GM23248 (cell line): ENCODE measurements at regions of chrX and their contacts with region 1.

Region 1: GRCh38 chrX:13515211-13515930 is 54.0 kb upstream of the EGFL6 start:
- DNase-seq: no peak
- H3K4me3 ChIP-seq: no peak overlapping the region
- H3K27ac ChIP-seq: no peak overlapping the region
- H3K4me1 ChIP-seq: no peaks in the 10 kb centered on the region
- H3K27me3 ChIP-seq: no peaks in the 10 kb centered on the region

Region 2: GRCh38 chrX:13357925-13358324 is 157.4 kb before region 1 on chrX:
- in situ Hi-C with region 1: no loop called
- DNase-seq: no peak
- H3K4me3 ChIP-seq: no peak overlapping the region
- H3K27ac ChIP-seq: peak overlapping the region; percentile 15; the same call in 1 of the 2 replicates
- H3K4me1 ChIP-seq: peaks cover 10% of the 10 kb centered on the region
- H3K27me3 ChIP-seq: no peaks in the 10 kb centered on the region

Region 3: GRCh38 chrX:13411496-13412207 is 103.7 kb before region 1 on chrX:
- in situ Hi-C with region 1: no loop called
- DNase-seq: no peak
- H3K4me3 ChIP-seq: no peak overlapping the region
- H3K27ac ChIP-seq: no peak overlapping the region
- H3K4me1 ChIP-seq: no peaks in the 10 kb centered on the region
- H3K27me3 ChIP-seq: no peaks in the 10 kb centered on the region

Region 4: GRCh38 chrX:13646154-13646549 is 130.8 kb after region 1 on chrX:
- in situ Hi-C with region 1: loop called (anchors 5 kb)
- DNase-seq: peak; percentile 77
- H3K4me3 ChIP-seq: no peak overlapping the region
- H3K27ac ChIP-seq: no peak overlapping the region
- H3K4me1 ChIP-seq: peaks cover 10% of the 10 kb centered on the region; the same call in 1 of the 2 replicates
- H3K27me3 ChIP-seq: no peaks in the 10 kb centered on the region

Region 5: GRCh38 chrX:14266705-14267104 is 751.3 kb after region 1 on chrX:
- in situ Hi-C with region 1: no loop called
- DNase-seq: no peak
- H3K4me3 ChIP-seq: no peak overlapping the region
- H3K27ac ChIP-seq: no peak overlapping the region
- H3K4me1 ChIP-seq: no peaks in the 10 kb centered on the region
- H3K27me3 ChIP-seq: no peaks in the 10 kb centered on the region